ENCODE measurements at regions of chr12 and their contacts with region 1.

Region 1: GRCh38 chr12:104526320-104526719 is 69.6 kb downstream of the CHST11 start:
- DNase-seq: peak; percentile 62 to 69
- H3K4me3 ChIP-seq: peak overlapping the region in 1 of 4 experiments; percentile 16; a peak in 3 of 8 replicates
- H3K27ac ChIP-seq: no peak overlapping the region
- H3K4me1 ChIP-seq: peaks cover 0 to 13% (median 7%) of the 10 kb centered on the region in 4 experiments; a peak in 4 of 7 replicates
- H3K27me3 ChIP-seq: no peaks in the 10 kb centered on the region
- CTCF ChIP-seq: no peak
- EP300 ChIP-seq: peak in 1 of 2 experiments; percentile 66; a peak in 1 of 3 replicates
- POLR2A ChIP-seq: no peak
- RAD21 ChIP-seq: peak; percentile 39 to 45

Region 2: DNA sequence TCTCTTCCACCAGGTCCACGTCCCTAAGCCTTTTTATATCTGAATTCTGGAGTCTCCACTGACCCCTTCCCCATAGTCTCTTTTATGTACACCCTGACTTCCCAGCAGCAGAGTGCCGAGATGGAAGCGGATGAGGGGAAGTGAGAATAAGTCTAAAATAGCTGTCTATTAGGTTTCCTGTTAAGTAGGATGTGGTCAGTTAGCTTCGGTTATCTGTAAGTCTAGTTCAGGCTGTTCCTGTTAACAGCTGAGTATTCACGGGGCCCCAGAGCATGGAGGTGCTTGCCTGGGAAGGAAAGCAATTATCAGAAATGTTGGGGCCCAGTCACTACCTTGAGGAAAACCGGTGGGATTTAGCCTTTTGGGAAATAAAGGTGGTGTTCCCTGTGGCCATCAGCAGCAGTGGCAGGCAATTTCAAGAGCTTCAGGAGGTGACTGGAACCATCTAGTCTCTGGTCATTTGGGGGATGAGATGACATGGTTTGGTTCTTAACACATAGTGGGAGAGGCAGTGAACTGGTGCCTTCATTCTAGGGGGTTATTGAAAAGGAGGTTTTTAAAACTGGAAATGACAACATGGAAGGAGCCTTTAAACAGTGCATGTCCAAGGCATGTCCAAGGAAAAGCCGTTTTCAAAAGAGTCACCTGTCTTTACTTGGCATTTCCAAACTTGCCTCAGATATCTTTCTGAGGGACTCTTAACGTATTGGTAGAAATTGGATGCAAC is 47.8 kb before region 1 on chr12:
- CTCF ChIA-PET with region 1: no interaction called
- POLR2A ChIA-PET with region 1: no interaction called
- DNase-seq: no peak
- H3K4me3 ChIP-seq: no peak overlapping the region
- H3K27ac ChIP-seq: no peak overlapping the region
- H3K4me1 ChIP-seq: no peaks in the 10 kb centered on the region
- H3K27me3 ChIP-seq: no peaks in the 10 kb centered on the region
- CTCF ChIP-seq: no peak
- EP300 ChIP-seq: no peak
- POLR2A ChIP-seq: no peak
- RAD21 ChIP-seq: no peak

Region 3: GRCh38 chr12:104546575-104546974 is 20.3 kb after region 1 on chr12:
- CTCF ChIA-PET with region 1: interaction called, 13 read pairs
- POLR2A ChIA-PET with region 1: no interaction called
- DNase-seq: no peak
- H3K4me3 ChIP-seq: no peak overlapping the region
- H3K27ac ChIP-seq: no peak overlapping the region
- H3K4me1 ChIP-seq: peaks cover 0 to 4% (median 0%) of the 10 kb centered on the region in 4 experiments; a peak in 2 of 7 replicates
- H3K27me3 ChIP-seq: no peaks in the 10 kb centered on the region
- CTCF ChIP-seq: no peak
- EP300 ChIP-seq: no peak
- POLR2A ChIP-seq: no peak
- RAD21 ChIP-seq: no peak